ENCODE measurements at regions of chr1 and their contacts with region 1.

Region 1: DNA sequence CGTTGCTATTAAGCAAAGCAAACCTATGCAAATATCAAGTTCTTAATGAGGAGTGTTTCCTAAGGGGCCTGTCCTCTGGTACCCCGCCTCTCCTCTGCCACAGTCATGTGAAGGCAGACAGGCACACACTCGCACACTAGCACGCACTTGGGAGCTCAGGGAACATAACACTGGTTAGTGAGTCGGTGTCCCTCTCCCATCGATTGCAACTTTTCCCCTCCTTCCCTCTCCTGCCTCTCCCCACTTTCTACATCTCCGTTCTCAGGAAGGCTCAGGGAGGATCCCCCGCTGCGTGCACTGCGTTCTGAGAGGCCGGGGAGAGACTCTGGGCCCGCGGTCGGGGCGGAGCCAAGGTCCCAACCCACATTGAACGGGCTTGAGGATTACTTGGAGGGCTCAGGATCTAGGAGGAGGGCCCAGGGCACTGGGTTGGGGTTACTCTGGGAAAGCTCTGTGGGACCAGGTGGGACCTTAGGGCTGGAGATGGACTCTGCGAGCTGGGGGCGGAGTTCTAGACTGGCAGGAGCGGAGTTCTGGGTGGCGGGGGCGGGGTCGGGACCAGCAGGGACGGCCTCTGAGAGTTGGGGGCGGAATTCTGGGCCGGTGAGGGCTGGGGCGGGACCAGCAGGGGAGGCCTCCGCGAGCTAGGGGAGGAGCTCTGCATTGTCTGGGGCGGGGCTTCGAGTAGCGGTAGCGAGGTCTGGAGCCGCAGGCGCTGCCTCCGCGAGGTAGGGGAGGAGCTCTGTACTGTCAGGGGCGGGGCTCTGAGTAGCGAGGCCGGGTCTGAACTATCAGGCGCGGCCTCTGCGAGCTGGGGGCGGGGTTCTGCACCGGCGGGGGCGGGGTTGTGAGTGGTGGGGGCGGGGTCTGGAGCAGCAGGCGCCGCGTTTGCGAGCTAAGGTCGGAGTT is 533 bp upstream of the LEPR start:
- DNase-seq: peak; percentile 96 to 98 (median 96)
- ATAC-seq: peak; percentile 91
- H3K4me3 ChIP-seq: peak overlapping the region; percentile 83
- H3K27ac ChIP-seq: peak overlapping the region; percentile 85
- H3K4me1 ChIP-seq: peaks cover 25 to 61% of the 10 kb centered on the region in 2 experiments
- H3K27me3 ChIP-seq: no peaks in the 10 kb centered on the region
- CTCF ChIP-seq: no peak
- EP300 ChIP-seq: no peak
- POLR2A ChIP-seq: peak; percentile 66
- RAD21 ChIP-seq: no peak

Region 2: GRCh38 chr1:65067491-65068201 is 352.3 kb before region 1 on chr1:
- CTCF ChIA-PET with region 1: no interaction called
- POLR2A ChIA-PET with region 1: no interaction called
- in situ Hi-C with region 1: loop called (anchors 10 kb)
- intact Hi-C with region 1: loop called (anchors 5 kb)
- DNase-seq: peak; percentile 66 to 76 (median 76)
- ATAC-seq: peak; percentile 39
- H3K4me3 ChIP-seq: peak overlapping the region; percentile 80
- H3K27ac ChIP-seq: peak overlapping the region; percentile 94
- H3K4me1 ChIP-seq: peaks cover 18 to 27% of the 10 kb centered on the region in 2 experiments; a peak in 4 of 5 replicates
- H3K27me3 ChIP-seq: no peaks in the 10 kb centered on the region
- CTCF ChIP-seq: no peak
- EP300 ChIP-seq: no peak
- POLR2A ChIP-seq: peak; percentile 87
- RAD21 ChIP-seq: no peak

Region 3: DNA sequence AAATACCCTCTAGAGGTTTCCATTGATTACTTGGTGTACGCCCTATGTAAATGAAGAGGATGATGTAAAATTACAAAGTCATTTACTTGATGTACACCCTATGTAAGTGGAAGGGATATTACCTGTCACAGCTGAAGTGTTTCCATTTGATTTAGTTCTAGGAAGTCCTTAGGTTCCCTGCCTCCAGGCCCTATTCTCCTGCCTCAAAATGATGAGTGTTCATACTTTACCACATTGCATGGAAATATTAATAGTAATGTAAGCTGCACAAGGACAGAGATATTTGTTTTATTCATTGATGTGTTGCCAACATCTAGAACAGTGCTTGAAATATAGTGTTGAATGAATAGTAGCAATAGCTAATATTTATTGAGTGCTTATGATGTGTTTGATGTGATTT is 281.4 kb before region 1 on chr1:
- CTCF ChIA-PET with region 1: no interaction called
- POLR2A ChIA-PET with region 1: no interaction called
- in situ Hi-C with region 1: no loop called
- intact Hi-C with region 1: no loop called
- DNase-seq: no peak
- ATAC-seq: no peak
- H3K4me3 ChIP-seq: no peak overlapping the region
- H3K27ac ChIP-seq: no peak overlapping the region
- H3K4me1 ChIP-seq: 0 out of 5 replicates have a peak, but pooled peaks cover 0 to 3% of the 10 kb centered on the region in 2 experiments
- H3K27me3 ChIP-seq: no peaks in the 10 kb centered on the region
- CTCF ChIP-seq: no peak
- EP300 ChIP-seq: no peak
- POLR2A ChIP-seq: no peak
- RAD21 ChIP-seq: no peak

Region 4: DNA sequence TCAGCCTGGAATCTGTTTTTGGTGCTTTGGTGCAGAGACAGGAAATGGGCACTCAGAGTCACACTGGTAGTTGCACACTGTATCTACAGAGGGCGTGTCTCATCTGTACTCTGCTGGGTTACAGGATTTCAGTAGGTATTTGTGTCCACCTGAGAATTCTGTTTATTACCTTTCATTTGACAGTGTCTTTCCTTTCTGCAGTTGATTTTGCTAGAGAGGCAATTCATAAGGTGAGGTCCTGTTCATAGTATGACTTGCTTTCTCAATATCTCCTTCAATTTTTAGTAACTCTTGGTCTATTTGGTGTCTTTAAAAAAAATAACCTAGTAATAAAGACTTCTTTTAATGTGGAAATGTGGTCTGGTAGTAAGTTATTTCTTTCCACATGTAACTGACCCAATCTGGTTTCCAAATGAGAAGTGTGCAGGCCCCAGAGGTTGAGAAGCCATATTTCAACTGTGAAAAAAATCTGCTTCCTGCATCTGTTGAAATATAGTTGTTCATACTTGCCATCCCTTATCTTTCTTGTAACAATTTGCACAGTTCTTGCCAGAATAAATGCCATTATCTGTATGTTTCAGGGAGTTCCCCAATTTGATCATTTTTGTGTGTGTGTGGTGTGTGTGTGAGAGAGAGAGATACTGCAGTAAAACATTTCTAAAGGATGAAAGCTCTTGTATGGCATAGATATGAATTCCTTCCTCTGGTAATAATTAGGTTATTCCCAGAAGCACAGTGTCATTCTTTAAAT is 189.0 kb before region 1 on chr1:
- CTCF ChIA-PET with region 1: no interaction called
- POLR2A ChIA-PET with region 1: interaction called, 3 read pairs
- in situ Hi-C with region 1: loop called (anchors 5 kb)
- intact Hi-C with region 1: loop called (anchors 2 kb)
- DNase-seq: peak; percentile 34 to 88 (median 46)
- ATAC-seq: peak; percentile 61
- H3K4me3 ChIP-seq: no peak overlapping the region
- H3K27ac ChIP-seq: peak overlapping the region; percentile 86
- H3K4me1 ChIP-seq: peaks cover 40 to 66% of the 10 kb centered on the region in 2 experiments
- H3K27me3 ChIP-seq: no peaks in the 10 kb centered on the region
- CTCF ChIP-seq: peak in 2 of 3 experiments; percentile 18 to 22; a peak in 1 of 6 replicates
- EP300 ChIP-seq: peak; percentile 98
- POLR2A ChIP-seq: no peak
- RAD21 ChIP-seq: peak; percentile 5; a peak in 1 of 4 replicates

Region 5: DNA sequence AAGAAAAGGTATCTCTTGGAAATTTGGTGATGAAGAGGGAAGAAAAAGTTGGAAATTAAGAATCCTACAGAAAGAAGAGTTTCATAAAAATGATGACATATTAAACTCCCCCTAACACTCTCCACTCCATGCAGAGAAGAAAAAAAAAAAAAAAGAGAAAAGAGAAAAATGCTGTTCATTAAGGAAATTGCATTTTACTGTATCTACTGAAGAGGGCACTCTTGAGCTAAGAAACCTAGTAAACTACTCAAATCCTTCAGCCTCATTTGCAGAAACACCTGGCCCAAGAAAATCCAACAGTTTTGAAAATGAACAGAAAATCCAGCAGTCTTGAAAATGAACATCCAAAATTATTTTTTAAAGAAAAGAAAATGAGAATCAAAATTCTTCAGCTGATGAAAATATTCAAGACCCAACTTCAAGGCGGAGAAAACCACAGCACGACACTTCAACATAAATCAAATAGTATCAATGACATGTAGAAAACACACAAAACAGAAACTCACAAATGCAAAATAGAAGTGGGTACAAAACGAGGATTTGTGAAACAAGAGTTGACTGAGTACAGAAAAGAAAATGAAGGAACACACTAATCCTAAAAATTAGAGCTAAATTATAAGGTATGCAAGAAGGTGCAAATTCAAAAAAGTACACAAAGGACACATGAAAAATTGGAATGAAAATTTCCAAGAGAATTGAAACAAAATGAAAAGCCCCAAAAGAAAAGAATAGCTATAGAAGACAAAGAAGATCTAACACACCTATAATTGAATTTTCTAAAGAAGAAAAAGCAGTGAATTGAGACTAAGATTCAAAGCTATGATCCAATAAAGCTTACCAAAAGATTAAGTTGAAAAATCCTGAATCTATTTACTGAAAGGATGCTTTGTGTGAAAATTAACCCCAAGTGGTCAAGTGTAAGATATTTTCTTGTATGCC is 183.8 kb before region 1 on chr1:
- CTCF ChIA-PET with region 1: no interaction called
- POLR2A ChIA-PET with region 1: interaction called, 3 read pairs
- in situ Hi-C with region 1: loop called (anchors 5 kb)
- intact Hi-C with region 1: loop called (anchors 2 kb)
- DNase-seq: peak in 3 of 4 experiments; percentile 24 to 81 (median 43)
- ATAC-seq: peak; percentile 5; the same call in 2 of the 3 replicates
- H3K4me3 ChIP-seq: no peak overlapping the region
- H3K27ac ChIP-seq: no peak overlapping the region
- H3K4me1 ChIP-seq: peaks cover 29 to 42% of the 10 kb centered on the region in 2 experiments; a peak in 4 of 5 replicates
- H3K27me3 ChIP-seq: no peaks in the 10 kb centered on the region
- CTCF ChIP-seq: peak; percentile 42 to 81 (median 70); a peak in 5 of 6 replicates
- EP300 ChIP-seq: no peak
- POLR2A ChIP-seq: no peak
- RAD21 ChIP-seq: peak; percentile 74 to 91

Region 6: DNA sequence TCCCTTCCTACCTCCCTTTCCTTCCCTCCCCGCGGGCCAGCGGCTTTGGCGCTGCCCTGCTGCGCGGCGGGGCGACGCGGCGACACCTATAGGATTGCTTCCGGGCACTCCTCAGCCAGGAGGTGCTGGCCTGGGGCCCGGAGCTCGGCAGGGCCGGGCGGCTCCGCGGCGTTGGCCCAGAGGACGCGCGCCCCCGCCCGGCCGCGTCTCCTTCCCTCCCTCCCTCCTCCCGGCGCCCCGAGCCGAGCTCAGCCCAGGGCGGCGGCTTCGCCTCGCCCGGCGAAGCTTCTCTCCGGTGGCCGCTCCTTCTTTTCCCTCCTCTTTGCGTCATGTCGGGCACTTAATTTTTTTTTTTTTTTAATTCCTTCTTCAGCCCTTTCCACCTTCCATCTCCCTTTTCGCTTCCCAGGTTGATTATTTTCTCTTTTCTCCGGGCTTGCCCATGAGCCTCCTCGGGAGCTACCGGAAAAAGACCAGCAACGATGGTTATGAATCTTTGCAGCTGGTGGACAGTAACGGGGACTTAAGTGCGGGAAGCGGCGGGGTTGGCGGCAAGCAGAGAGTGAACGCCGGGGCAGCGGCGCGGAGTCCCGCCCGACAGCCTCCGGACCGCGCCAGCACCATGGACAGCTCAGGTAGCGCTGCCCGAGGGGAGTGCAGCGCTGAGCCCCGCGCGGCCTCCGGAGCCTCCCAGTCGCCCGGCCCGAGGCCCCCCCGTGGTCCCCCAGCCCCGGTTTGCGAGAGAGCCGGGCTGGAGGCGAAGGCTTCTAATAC is 110.4 kb before region 1 on chr1 and contains the start of gene DNAJC6:
- CTCF ChIA-PET with region 1: no interaction called
- POLR2A ChIA-PET with region 1: no interaction called
- in situ Hi-C with region 1: no loop called
- intact Hi-C with region 1: loop called (anchors 2 kb)
- DNase-seq: peak; percentile 76 to 88 (median 80)
- ATAC-seq: peak; percentile 93
- H3K4me3 ChIP-seq: peak within 1 kb of the TSS; percentile 51
- H3K27ac ChIP-seq: peak within 1 kb of the TSS; percentile 68
- H3K4me1 ChIP-seq: peaks cover 16 to 25% of the 10 kb centered on the region in 2 experiments; a peak in 4 of 5 replicates
- H3K27me3 ChIP-seq: no peaks in the 10 kb centered on the region
- CTCF ChIP-seq: peak in 2 of 3 experiments; percentile 37 to 58; a peak in 4 of 6 replicates
- EP300 ChIP-seq: no peak; the same call in 1 of the 2 replicates
- POLR2A ChIP-seq: 0 out of 2 replicates have a peak, but pooled peaks have one; percentile 13
- RAD21 ChIP-seq: peak in 1 of 2 experiments; percentile 37; a peak in 3 of 4 replicates
- polyA plus RNA-seq, gene DNAJC6: 6.7 to 8.2 TPM

Region 7: GRCh38 chr1:65478379-65479026 is 58.6 kb after region 1 on chr1:
- CTCF ChIA-PET with region 1: no interaction called
- POLR2A ChIA-PET with region 1: no interaction called
- in situ Hi-C with region 1: no loop called
- intact Hi-C with region 1: loop called (anchors 5 kb)
- DNase-seq: no peak
- ATAC-seq: 0 out of 3 replicates have a peak, but pooled peaks have one; percentile 2
- H3K4me3 ChIP-seq: peak overlapping the region; percentile 57
- H3K27ac ChIP-seq: peak overlapping the region; percentile 77
- H3K4me1 ChIP-seq: peaks cover 7 to 21% of the 10 kb centered on the region in 2 experiments; a peak in 3 of 5 replicates
- H3K27me3 ChIP-seq: no peaks in the 10 kb centered on the region
- CTCF ChIP-seq: no peak
- EP300 ChIP-seq: no peak
- POLR2A ChIP-seq: 0 out of 2 replicates have a peak, but pooled peaks have one; percentile 23
- RAD21 ChIP-seq: no peak

Region 8: DNA sequence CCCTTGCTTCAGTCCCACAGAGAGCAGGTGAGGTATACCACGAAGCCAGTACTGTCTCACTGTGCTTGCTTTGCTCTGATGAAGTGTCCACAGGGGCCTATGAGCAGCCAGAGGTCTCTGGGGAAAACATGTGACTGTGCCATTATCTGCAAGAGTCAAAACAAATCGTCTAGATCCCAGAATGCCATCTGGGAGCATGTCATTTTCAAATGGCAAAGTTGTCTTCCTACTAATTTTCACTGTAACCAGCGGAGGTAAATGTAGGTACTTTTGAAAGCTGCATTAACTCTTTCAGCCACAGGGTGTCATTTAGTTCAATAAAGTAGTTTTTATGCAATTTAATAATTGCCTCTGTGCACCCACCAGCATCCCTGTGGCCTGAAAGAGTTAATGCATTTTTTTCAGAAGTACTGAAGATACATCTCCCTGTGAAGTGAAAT is 940.4 kb after region 1 on chr1:
- CTCF ChIA-PET with region 1: no interaction called
- POLR2A ChIA-PET with region 1: no interaction called
- in situ Hi-C with region 1: no loop called
- intact Hi-C with region 1: no loop called
- DNase-seq: peak in 1 of 4 experiments; percentile 8
- ATAC-seq: no peak
- H3K4me3 ChIP-seq: no peak overlapping the region
- H3K27ac ChIP-seq: no peak overlapping the region
- H3K4me1 ChIP-seq: no peaks in the 10 kb centered on the region
- H3K27me3 ChIP-seq: no peaks in the 10 kb centered on the region
- CTCF ChIP-seq: peak in 2 of 3 experiments; percentile 5 to 6; a peak in 1 of 6 replicates
- EP300 ChIP-seq: no peak
- POLR2A ChIP-seq: no peak
- RAD21 ChIP-seq: 0 out of 4 replicates have a peak, but pooled peaks of 1 of the 2 experiments have one; percentile 6

Measured in K562 (cell line).